ENCODE measurements at regions of chr16 and their contacts with region 1.

Region 1: DNA sequence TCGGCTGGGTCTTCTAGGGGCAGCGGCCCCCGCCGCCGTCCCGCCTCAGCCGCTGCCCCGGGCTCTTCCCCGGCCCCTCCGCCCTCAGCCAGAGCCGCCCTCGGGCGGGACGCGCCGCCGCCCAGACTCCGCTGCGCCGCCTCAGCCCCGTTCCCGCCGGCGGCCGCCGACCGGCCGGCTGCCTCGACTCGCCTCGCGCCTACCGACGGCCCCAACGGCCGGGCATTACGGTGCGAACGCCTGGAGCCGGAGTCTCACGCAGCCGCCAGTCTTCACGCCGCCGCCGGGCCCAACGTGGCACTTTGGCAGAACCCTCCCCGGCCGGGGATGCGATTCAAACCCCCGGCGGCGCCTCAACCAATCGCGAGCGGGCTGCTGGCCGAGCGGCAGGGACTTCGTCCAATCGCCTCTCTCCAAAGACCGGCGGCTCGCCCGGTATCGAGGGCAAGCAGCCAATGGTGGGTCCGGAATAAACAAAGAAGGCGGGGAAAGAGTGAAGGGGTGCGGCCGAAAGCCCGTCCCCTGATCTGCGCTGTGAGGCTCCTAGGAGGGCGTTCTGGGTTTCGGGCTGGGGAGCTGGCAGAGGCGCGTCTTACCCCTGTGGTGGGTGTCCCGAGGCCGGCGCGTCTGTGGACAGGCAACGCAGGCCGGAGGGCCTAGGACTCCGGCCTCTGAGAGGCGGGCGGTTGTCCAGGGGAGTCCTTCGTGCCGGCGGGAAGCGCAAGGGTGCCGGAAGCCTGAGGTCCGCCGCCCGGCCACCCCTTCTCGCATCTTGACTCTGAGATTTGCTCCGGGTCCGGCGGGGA is at the start of gene CDR2:
- DNase-seq: peak; percentile 95 to 99 (median 98)
- ATAC-seq: peak; percentile 92
- H3K4me3 Mint-ChIP-seq: peak within 1 kb of the TSS; percentile 93 to 99 (median 97)
- H3K27ac Mint-ChIP-seq: peak within 1 kb of the TSS; percentile 87 to 98 (median 95)
- H3K4me1 Mint-ChIP-seq: peaks cover 16 to 54% (median 49%) of the 10 kb centered on the region in 4 donors
- H3K27me3 Mint-ChIP-seq: no peaks in the 10 kb centered on the region
- polyA plus RNA-seq, gene CDR2: 46.8 to 91.0 (median 66.9) TPM

Region 2: GRCh38 chr16:22346483-22346882 is 28.0 kb before region 1 on chr16:
- POLR2A ChIA-PET with region 1: interaction called, 10 read pairs
- DNase-seq: no peak
- ATAC-seq: no peak
- H3K4me3 Mint-ChIP-seq: no peak overlapping the region
- H3K27ac Mint-ChIP-seq: peak overlapping the region; percentile 22 to 89 (median 52)
- H3K4me1 Mint-ChIP-seq: peaks cover 9 to 32% (median 22%) of the 10 kb centered on the region in 4 donors
- H3K27me3 Mint-ChIP-seq: no peaks in the 10 kb centered on the region

Region 3: GRCh38 chr16:22353191-22353919 is 21.2 kb before region 1 on chr16:
- POLR2A ChIA-PET with region 1: interaction called, 193 read pairs
- DNase-seq: peak in 2 of 10 donors; percentile 8 to 27
- ATAC-seq: peak in 1 of 2 donors; percentile 45
- H3K4me3 Mint-ChIP-seq: peak overlapping the region in 9 of 10 donors; percentile 20 to 54 (median 37)
- H3K27ac Mint-ChIP-seq: peak overlapping the region; percentile 45 to 91 (median 87)
- H3K4me1 Mint-ChIP-seq: peaks cover 14 to 72% (median 57%) of the 10 kb centered on the region in 4 donors
- H3K27me3 Mint-ChIP-seq: no peaks in the 10 kb centered on the region

Measured in naive thymus-derived CD8-positive, alpha-beta T cell (primary cell).